ENCODE measurements at regions of chr22 and their contacts with region 1.

Region 1: DNA sequence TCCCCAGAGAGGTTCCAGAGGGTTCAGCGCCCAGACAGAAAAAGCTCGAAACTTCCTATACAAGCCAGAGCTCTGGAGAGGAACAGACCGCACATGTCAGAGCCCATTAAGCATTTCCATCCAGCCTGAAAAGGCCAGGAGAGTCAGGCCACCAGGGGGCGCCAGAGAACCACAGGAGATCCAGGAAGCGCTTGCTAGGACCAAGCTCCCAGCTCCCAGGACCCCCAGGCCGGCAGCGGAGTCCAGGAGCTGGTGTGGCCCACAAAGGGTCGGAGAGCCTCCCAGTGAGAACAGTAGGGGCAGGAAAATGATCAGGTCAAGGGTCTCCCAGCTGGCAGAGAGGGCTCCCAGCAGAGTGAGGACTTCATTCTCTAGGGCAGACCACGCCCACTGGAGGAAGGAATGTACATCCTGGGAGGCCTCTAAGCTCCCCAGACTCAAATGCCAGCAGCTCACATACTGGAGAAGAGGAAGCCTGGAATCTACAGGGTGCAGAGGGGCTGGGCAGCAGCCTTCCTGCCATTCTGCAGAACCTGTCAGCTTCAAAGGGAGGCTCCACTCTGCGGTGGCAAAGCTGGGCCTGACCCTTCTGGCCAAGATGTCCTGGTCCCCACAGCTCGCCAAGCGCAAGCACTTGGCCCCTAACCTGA is 2.1 kb upstream of the MEI1 start:
- DNase-seq: peak; percentile 87
- H3K4me3 Mint-ChIP-seq: peak overlapping the region; percentile 52
- H3K27ac Mint-ChIP-seq: peak overlapping the region; percentile 49
- H3K4me1 Mint-ChIP-seq: peaks cover 6% of the 10 kb centered on the region
- H3K27me3 Mint-ChIP-seq: no peaks in the 10 kb centered on the region
- CTCF ChIP-seq: peak; percentile 86

Region 2: DNA sequence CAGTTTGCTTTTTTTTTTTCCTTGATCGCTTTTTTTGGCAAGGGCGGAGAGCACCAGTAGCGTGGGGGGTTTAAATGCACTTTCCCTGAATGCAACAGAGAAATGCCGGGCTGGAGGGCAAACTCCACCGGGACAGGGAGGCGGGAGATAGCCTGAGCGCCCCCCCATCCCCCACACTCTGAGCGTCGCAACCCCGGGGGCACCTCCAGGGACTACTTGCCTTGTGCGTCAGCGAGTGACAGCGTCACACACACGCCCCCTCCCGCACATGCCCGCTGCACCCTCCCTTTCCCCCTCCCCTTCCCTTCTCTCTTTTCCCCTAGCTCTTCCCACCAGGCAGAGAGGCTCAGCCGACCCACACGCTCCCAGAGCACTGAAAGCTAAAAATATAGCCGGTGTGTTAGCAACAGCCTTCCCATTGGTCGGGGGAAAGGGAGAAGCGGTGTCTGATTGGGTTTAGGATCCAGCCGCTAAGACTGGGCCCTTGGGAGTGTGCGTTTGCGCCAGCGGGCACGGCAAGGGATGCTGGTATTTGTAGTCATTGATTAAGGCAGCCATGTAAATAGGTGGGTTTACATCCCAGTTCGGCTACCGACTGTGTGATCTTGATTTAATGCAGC is 249.0 kb before region 1 on chr22:
- CTCF ChIA-PET with region 1: no interaction called
- POLR2A ChIA-PET with region 1: no interaction called
- intact Hi-C with region 1: no loop called
- DNase-seq: peak; percentile 100
- H3K4me3 Mint-ChIP-seq: peak overlapping the region; percentile 96
- H3K27ac Mint-ChIP-seq: peak overlapping the region; percentile 97
- H3K4me1 Mint-ChIP-seq: peaks cover 11% of the 10 kb centered on the region
- H3K27me3 Mint-ChIP-seq: no peaks in the 10 kb centered on the region
- CTCF ChIP-seq: no peak

Region 3: DNA sequence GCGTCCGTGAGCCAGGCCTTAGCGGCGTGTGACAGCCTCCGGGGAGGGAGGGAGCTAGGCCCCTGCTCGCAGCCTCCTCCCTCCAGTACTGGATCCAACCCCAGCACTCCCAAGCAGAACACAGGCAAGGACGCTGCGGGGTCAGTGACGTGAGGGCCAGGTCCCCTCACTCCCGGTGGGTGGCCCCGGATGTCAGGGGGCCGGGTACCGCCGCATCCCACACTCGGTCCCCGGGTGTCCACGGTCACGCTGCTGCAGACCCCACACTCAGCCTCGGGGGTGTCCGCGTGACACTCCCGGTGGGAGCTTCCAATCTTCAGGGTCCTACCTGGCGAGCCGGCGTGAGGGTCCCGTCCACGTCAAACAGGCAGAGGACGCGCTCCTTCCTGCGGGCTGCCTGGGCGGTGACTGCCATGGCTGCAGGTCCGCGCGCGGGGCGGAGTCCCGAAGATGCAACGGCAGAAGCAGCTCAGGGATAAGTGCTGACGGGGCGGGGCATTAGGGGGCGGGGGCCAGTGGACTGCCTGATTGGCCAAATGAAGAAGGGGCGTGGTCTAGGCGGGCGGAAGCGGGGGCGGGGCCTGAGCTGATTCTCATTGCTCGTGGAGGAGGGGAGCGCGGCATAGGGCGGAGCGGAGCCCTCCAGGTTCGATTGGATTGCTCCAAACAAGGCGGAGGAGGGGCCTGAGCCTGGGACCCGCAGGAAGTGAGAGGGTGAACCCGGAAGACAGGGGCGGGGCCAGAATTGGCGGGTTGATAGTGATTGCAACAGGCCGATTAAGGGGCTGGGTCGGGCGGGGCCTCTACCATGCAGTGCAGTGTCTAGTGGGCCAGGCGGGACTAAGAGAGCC is 107.6 kb before region 1 on chr22 and contains the start of gene PMM1:
- CTCF ChIA-PET with region 1: no interaction called
- POLR2A ChIA-PET with region 1: no interaction called
- intact Hi-C with region 1: no loop called
- DNase-seq: peak; percentile 100
- H3K4me3 Mint-ChIP-seq: peak within 1 kb of the TSS; percentile 88
- H3K27ac Mint-ChIP-seq: peak within 1 kb of the TSS; percentile 86
- H3K4me1 Mint-ChIP-seq: peaks cover 4% of the 10 kb centered on the region
- H3K27me3 Mint-ChIP-seq: no peaks in the 10 kb centered on the region
- CTCF ChIP-seq: no peak
- total RNA-seq, gene PMM1: 29.9 and 30.9 TPM in 2 replicates

Region 4: GRCh38 chr22:41636467-41636866 is 60.8 kb before region 1 on chr22:
- CTCF ChIA-PET with region 1: no interaction called
- POLR2A ChIA-PET with region 1: no interaction called
- intact Hi-C with region 1: no loop called
- DNase-seq: peak; percentile 72
- H3K4me3 Mint-ChIP-seq: no peak overlapping the region
- H3K27ac Mint-ChIP-seq: peak overlapping the region; percentile 77
- H3K4me1 Mint-ChIP-seq: peaks cover 6% of the 10 kb centered on the region
- H3K27me3 Mint-ChIP-seq: no peaks in the 10 kb centered on the region
- CTCF ChIP-seq: no peak

Region 5: GRCh38 chr22:41648432-41648831 is 48.8 kb before region 1 on chr22:
- CTCF ChIA-PET with region 1: no interaction called
- POLR2A ChIA-PET with region 1: no interaction called
- intact Hi-C with region 1: no loop called
- DNase-seq: no peak
- H3K4me3 Mint-ChIP-seq: no peak overlapping the region
- H3K27ac Mint-ChIP-seq: no peak overlapping the region
- H3K4me1 Mint-ChIP-seq: no peaks in the 10 kb centered on the region
- H3K27me3 Mint-ChIP-seq: no peaks in the 10 kb centered on the region
- CTCF ChIP-seq: no peak

Region 6: GRCh38 chr22:41682033-41682807 is 15.0 kb before region 1 on chr22:
- CTCF ChIA-PET with region 1: interaction called, 22 read pairs
- POLR2A ChIA-PET with region 1: interaction called, 19 read pairs
- intact Hi-C with region 1: no loop called
- DNase-seq: peak; percentile 85
- H3K4me3 Mint-ChIP-seq: peak overlapping the region; percentile 87
- H3K27ac Mint-ChIP-seq: peak overlapping the region; percentile 90
- H3K4me1 Mint-ChIP-seq: peaks cover 18% of the 10 kb centered on the region
- H3K27me3 Mint-ChIP-seq: no peaks in the 10 kb centered on the region
- CTCF ChIP-seq: no peak

Region 7: DNA sequence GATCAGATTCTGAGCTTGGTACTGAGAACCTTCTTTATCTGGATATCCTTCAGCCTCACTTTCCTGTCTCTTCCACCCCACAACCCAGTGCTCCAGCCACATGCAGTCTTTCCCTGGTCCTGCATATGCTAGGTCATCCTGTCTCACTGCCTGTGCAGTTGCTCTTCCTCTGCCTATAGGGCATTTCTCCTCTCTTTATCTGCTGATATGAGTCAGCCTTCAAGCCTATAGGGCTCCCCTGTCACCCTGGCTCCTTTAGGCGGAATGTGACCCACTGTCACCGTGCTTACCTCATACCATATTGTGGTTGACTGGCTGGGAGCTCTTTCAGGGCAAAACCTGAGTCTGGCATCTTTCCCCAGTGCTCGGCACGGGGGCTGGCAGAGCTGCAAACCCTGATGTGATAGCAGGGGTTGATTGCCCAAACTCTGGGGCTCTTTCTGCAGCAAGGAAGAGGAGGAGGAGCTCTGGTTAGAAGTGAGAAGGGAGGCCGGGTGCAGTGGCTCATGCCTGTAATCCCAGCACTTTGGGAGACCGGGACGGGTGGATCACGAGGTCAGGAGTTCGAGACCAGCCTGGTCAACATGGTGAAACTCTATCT is 28.4 kb after region 1 on chr22:
- CTCF ChIA-PET with region 1: interaction called, 12 read pairs
- POLR2A ChIA-PET with region 1: no interaction called
- intact Hi-C with region 1: no loop called
- DNase-seq: no peak
- H3K4me3 Mint-ChIP-seq: no peak overlapping the region
- H3K27ac Mint-ChIP-seq: no peak overlapping the region
- H3K4me1 Mint-ChIP-seq: no peaks in the 10 kb centered on the region
- H3K27me3 Mint-ChIP-seq: peaks cover 7% of the 10 kb centered on the region
- CTCF ChIP-seq: no peak

Region 8: GRCh38 chr22:41800348-41801146 is 103.3 kb after region 1 on chr22 and contains the start of gene CCDC134:
- CTCF ChIA-PET with region 1: interaction called, 20 read pairs
- POLR2A ChIA-PET with region 1: interaction called, 5 read pairs
- intact Hi-C with region 1: loop called (anchors 2 kb)
- DNase-seq: peak; percentile 83
- H3K4me3 Mint-ChIP-seq: peak within 1 kb of the TSS; percentile 84
- H3K27ac Mint-ChIP-seq: peak within 1 kb of the TSS; percentile 91
- H3K4me1 Mint-ChIP-seq: peaks cover 14% of the 10 kb centered on the region
- H3K27me3 Mint-ChIP-seq: no peaks in the 10 kb centered on the region
- CTCF ChIP-seq: no peak
- total RNA-seq, gene CCDC134: 4.0 and 4.3 TPM in 2 replicates

Region 9: GRCh38 chr22:41822317-41823060 is 125.2 kb after region 1 on chr22:
- CTCF ChIA-PET with region 1: interaction called, 16 read pairs
- POLR2A ChIA-PET with region 1: no interaction called
- intact Hi-C with region 1: loop called (anchors 1 kb)
- DNase-seq: peak; percentile 71
- H3K4me3 Mint-ChIP-seq: no peak overlapping the region
- H3K27ac Mint-ChIP-seq: peak overlapping the region; percentile 1
- H3K4me1 Mint-ChIP-seq: no peaks in the 10 kb centered on the region
- H3K27me3 Mint-ChIP-seq: no peaks in the 10 kb centered on the region
- CTCF ChIP-seq: peak; percentile 51

Region 10: DNA sequence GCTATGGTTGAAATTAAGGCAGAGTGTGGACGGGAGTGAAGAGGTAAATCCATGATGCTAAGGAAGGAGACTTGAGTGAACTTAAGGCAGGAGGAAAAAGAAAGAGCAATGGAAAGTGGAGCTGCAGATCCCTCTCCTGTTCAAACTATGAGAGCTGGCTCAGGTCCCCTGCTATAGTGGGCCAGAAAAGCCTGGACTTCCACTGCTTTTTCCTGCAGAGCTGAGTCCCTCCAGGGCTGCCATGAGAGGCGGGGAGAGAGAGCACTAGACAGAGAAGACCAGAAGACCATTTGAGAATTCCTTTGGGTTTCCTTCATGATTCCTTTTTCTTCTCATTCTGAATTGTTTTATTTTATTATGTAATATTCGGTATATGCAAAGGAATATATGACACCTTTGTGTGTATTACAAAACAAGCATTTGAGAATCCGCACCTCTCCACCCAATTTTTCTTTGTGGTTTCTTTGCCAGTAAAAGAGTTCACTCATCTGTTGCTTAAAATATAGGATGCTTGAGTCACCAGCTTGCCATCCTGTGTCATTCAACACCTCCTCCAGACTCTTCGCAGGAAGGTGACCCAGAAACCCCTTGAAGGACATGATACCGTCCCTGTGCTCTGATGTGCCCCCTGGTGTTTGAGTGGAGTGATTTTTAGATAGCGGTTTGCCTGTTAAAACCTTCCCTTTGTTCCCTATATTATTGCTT is 160.1 kb after region 1 on chr22:
- CTCF ChIA-PET with region 1: interaction called, 16 read pairs
- POLR2A ChIA-PET with region 1: interaction called, 9 read pairs
- intact Hi-C with region 1: loop called (anchors 2 kb)
- DNase-seq: peak; percentile 94
- H3K4me3 Mint-ChIP-seq: peak overlapping the region; percentile 43
- H3K27ac Mint-ChIP-seq: peak overlapping the region; percentile 81
- H3K4me1 Mint-ChIP-seq: peaks cover 29% of the 10 kb centered on the region
- H3K27me3 Mint-ChIP-seq: no peaks in the 10 kb centered on the region
- CTCF ChIP-seq: peak; percentile 48

Measured in MCF 10A (cell line).